ENCODE measurements at regions of chr10 and their contacts with region 1.

Region 1: DNA sequence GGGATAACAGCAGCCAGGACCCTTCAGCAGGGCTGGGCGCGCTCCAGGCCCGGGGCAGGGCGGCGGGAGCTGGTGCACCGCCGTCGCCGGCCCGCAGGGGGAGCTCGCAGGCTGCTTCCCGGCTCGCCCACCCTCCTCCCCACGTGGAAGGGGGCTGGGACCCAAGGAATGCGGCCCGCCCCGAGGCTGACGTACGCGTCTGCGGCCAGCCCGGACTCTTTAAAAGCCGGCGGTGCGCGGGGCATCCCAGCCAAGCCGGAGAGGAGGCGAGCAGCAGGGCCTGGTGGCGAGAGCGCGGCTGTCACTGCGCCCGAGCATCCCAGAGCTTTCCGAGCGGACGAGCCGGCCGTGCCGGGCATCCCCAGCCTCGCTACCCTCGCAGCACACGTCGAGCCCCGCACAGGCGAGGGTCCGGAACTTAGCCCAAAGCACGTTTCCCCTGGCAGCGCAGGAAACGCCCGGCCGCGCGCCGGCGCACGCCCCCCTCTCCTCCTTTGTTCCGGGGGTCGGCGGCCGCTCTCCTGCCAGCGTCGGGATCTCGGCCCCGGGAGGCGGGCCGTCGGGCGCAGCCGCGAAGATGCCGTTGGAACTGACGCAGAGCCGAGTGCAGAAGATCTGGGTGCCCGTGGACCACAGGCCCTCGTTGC is at the start of gene PFKFB3:
- DNase-seq: peak; percentile 94
- H3K4me3 Mint-ChIP-seq: peak within 1 kb of the TSS; percentile 99
- H3K27ac Mint-ChIP-seq: peak within 1 kb of the TSS; percentile 83
- H3K4me1 Mint-ChIP-seq: peaks cover 36% of the 10 kb centered on the region
- H3K27me3 Mint-ChIP-seq: no peaks in the 10 kb centered on the region
- total RNA-seq, gene PFKFB3: 87.7 to 88.5 TPM

Region 2: GRCh38 chr10:6144406-6145165 is 58.2 kb before region 1 on chr10:
- CTCF ChIA-PET with region 1: interaction called, 4 read pairs
- intact Hi-C with region 1: loop called (anchors 2 kb)
- DNase-seq: peak; percentile 91
- H3K4me3 Mint-ChIP-seq: peak overlapping the region; percentile 83
- H3K27ac Mint-ChIP-seq: peak overlapping the region; percentile 86
- H3K4me1 Mint-ChIP-seq: peaks cover 80% of the 10 kb centered on the region
- H3K27me3 Mint-ChIP-seq: no peaks in the 10 kb centered on the region

Region 3: GRCh38 chr10:6171881-6172695 is 30.7 kb before region 1 on chr10:
- CTCF ChIA-PET with region 1: interaction called, 6 read pairs
- intact Hi-C with region 1: loop called (anchors 1 kb)
- DNase-seq: peak; percentile 82
- H3K4me3 Mint-ChIP-seq: no peak overlapping the region
- H3K27ac Mint-ChIP-seq: peak overlapping the region; percentile 70
- H3K4me1 Mint-ChIP-seq: peaks cover 86% of the 10 kb centered on the region
- H3K27me3 Mint-ChIP-seq: no peaks in the 10 kb centered on the region

Region 4: GRCh38 chr10:6300106-6300783 is 97.4 kb after region 1 on chr10:
- CTCF ChIA-PET with region 1: interaction called, 3 read pairs
- intact Hi-C with region 1: loop called (anchors 5 kb)
- DNase-seq: peak; percentile 79
- H3K4me3 Mint-ChIP-seq: peak overlapping the region; percentile 35
- H3K27ac Mint-ChIP-seq: peak overlapping the region; percentile 91
- H3K4me1 Mint-ChIP-seq: peaks cover 51% of the 10 kb centered on the region
- H3K27me3 Mint-ChIP-seq: no peaks in the 10 kb centered on the region

Region 5: GRCh38 chr10:6388261-6388893 is 185.6 kb after region 1 on chr10:
- CTCF ChIA-PET with region 1: interaction called, 11 read pairs
- intact Hi-C with region 1: no loop called
- DNase-seq: peak; percentile 30
- H3K4me3 Mint-ChIP-seq: no peak overlapping the region
- H3K27ac Mint-ChIP-seq: peak overlapping the region; percentile 68
- H3K4me1 Mint-ChIP-seq: peaks cover 18% of the 10 kb centered on the region
- H3K27me3 Mint-ChIP-seq: no peaks in the 10 kb centered on the region

Region 6: DNA sequence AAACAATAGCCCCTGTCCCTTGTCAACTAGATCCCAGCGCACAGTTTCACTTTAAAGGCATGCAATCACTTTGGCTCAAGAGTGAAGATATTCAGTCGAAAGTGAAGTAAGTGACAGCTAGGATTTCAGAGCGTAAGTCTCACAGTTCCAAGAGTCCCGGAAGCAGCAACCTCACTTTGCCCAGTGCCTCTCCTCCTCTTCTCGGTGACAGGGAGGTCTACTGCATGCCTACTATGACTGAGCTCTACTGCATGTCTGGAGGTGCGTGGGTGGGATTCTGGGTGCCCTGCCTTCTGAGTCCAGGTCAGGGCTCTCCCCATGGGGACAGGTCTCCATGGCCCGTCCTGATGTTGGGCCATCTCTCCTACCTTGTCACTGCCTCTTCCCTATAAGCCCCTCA is 360.3 kb after region 1 on chr10:
- CTCF ChIA-PET with region 1: no interaction called
- intact Hi-C with region 1: loop called (anchors 10 kb)
- DNase-seq: peak; percentile 84
- H3K4me3 Mint-ChIP-seq: peak overlapping the region; percentile 61
- H3K27ac Mint-ChIP-seq: peak overlapping the region; percentile 82
- H3K4me1 Mint-ChIP-seq: peaks cover 85% of the 10 kb centered on the region
- H3K27me3 Mint-ChIP-seq: no peaks in the 10 kb centered on the region